H1 (cell line): ENCODE measurements at regions of chr17 and their contacts with region 1.

Region 1: GRCh38 chr17:8409966-8410864 is 12.6 kb upstream of the RNF222 start:
- DNase-seq: peak; percentile 82 to 95
- H3K4me3 ChIP-seq: no peak overlapping the region
- H3K27ac ChIP-seq: no peak overlapping the region
- H3K4me1 ChIP-seq: peaks cover 0 to 10% (median 4%) of the 10 kb centered on the region in 4 experiments; a peak in 6 of 7 replicates
- H3K27me3 ChIP-seq: no peaks in the 10 kb centered on the region
- CTCF ChIP-seq: peak; percentile 78 to 99 (median 82)
- EP300 ChIP-seq: no peak
- POLR2A ChIP-seq: no peak
- RAD21 ChIP-seq: peak; percentile 79 to 80

Region 2: DNA sequence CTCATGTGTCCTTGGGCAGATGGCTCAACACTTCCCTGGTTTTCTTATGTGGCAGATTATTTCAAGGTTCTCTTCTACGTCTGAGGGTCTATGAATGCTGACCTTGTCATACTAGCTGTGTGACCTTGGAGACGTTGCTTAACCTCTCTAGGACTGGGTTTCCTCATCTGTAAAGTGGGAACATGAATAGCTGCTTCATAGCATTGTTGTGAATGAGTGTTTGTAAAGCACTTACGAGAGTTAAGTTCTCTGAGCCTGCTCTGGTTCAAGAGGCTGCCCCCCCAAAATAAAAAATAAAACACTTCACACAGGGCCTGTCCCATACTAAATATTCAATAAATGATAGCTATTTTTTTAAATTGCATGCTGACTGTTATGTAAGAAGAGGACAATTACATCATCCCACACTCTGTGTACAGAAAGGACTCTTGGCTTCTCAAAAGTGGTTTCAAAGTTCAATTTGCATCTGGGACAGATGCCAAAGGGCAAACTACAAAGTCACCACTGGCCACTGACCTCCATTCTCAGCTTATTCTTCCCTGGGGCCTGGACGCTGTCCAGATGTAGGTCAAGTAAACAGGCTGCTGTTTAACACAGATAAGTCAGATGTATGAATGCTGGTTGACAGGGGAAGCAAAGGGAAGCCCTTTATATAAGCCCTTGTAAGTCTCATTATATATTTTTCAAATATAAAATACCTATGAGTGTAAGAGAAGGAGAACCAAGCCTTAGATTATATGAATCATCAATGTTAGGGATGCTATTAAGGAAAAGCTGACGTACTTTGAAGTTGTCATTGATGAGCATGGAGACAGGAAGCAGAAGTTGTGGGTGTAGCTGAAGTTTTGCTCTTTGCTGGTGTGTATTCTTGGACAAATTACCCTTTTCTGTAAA is 10.1 kb after region 1 on chr17:
- CTCF ChIA-PET with region 1: interaction called, 21 read pairs
- POLR2A ChIA-PET with region 1: no interaction called
- DNase-seq: no peak
- H3K4me3 ChIP-seq: no peak overlapping the region
- H3K27ac ChIP-seq: no peak overlapping the region
- H3K4me1 ChIP-seq: no peaks in the 10 kb centered on the region
- H3K27me3 ChIP-seq: no peaks in the 10 kb centered on the region
- CTCF ChIP-seq: no peak
- EP300 ChIP-seq: no peak
- POLR2A ChIP-seq: no peak
- RAD21 ChIP-seq: no peak